Activated CD8-positive, alpha-beta memory T cell treated with anti-CD3 and anti-CD28 coated beads, Interleukin-2, amount 10 ng/mL, durations not matched to agents 7 days and 5 days (primary cell): ENCODE measurements at regions of chr17 and their contacts with region 1.

Region 1: GRCh38 chr17:45228763-45229539 is 7.3 kb downstream of the FMNL1 start:
- DNase-seq: peak; percentile 93
- ATAC-seq: peak; percentile 47
- H3K4me3 Mint-ChIP-seq: peak overlapping the region; percentile 93
- H3K27ac Mint-ChIP-seq: peak overlapping the region; percentile 100
- H3K4me1 Mint-ChIP-seq: peaks cover 74% of the 10 kb centered on the region
- H3K27me3 Mint-ChIP-seq: no peaks in the 10 kb centered on the region

Region 2: GRCh38 chr17:45087504-45087975 is 141.4 kb before region 1 on chr17:
- CTCF ChIA-PET with region 1: no interaction called
- DNase-seq: no peak
- ATAC-seq: no peak
- H3K4me3 Mint-ChIP-seq: no peak overlapping the region
- H3K27ac Mint-ChIP-seq: no peak overlapping the region
- H3K4me1 Mint-ChIP-seq: peaks cover 12% of the 10 kb centered on the region
- H3K27me3 Mint-ChIP-seq: no peaks in the 10 kb centered on the region

Region 3: GRCh38 chr17:45241328-45242011 is 12.5 kb after region 1 on chr17:
- CTCF ChIA-PET with region 1: interaction called, 386 read pairs
- DNase-seq: no peak
- ATAC-seq: no peak
- H3K4me3 Mint-ChIP-seq: no peak overlapping the region
- H3K27ac Mint-ChIP-seq: no peak overlapping the region
- H3K4me1 Mint-ChIP-seq: peaks cover 33% of the 10 kb centered on the region
- H3K27me3 Mint-ChIP-seq: no peaks in the 10 kb centered on the region

Region 4: GRCh38 chr17:45247429-45248131 is 18.6 kb after region 1 on chr17:
- CTCF ChIA-PET with region 1: interaction called, 386 read pairs
- DNase-seq: peak; percentile 100
- ATAC-seq: peak; percentile 91
- H3K4me3 Mint-ChIP-seq: peak overlapping the region; percentile 82
- H3K27ac Mint-ChIP-seq: peak overlapping the region; percentile 96
- H3K4me1 Mint-ChIP-seq: peaks cover 60% of the 10 kb centered on the region
- H3K27me3 Mint-ChIP-seq: no peaks in the 10 kb centered on the region

Region 5: DNA sequence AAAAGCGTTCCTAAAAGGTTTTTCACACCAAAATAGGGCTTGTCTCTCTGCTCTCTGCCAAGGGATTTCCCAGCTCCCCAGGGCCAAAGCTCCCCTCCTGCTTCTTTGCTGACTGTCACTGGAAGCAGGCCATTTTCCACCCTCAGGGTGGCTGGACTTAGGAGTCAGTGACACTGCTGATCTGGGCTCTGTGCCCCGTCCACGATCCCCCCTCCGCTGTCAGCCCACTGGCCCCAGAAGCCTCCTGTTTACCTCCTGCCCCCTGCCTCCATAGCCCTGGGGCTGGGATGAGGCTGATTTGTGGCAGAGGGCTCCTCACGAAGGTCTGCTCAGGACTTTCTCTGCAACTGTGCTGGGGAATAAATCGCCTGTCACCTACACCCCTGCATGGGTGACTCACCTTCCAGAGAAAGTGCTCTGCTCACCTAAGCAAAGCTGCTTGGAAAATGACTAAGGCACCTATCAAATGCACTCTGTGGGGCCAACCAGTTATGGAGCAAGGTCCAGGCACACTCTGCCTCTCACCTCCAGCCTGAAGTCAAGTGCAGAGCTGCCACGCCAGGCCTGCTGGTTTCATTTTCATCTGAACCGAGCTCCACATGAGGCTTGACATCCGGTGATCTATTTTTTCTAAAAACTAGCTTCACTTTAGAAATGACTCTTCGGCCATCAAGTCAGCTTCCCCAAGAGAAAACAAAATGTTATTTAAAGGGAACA is 83.0 kb after region 1 on chr17:
- CTCF ChIA-PET with region 1: interaction called, 16 read pairs
- DNase-seq: peak; percentile 94
- ATAC-seq: peak; percentile 57
- H3K4me3 Mint-ChIP-seq: peak overlapping the region; percentile 97
- H3K27ac Mint-ChIP-seq: peak overlapping the region; percentile 90
- H3K4me1 Mint-ChIP-seq: peaks cover 70% of the 10 kb centered on the region
- H3K27me3 Mint-ChIP-seq: no peaks in the 10 kb centered on the region

Region 6: GRCh38 chr17:45317112-45317928 is 88.4 kb after region 1 on chr17:
- CTCF ChIA-PET with region 1: interaction called, 16 read pairs
- DNase-seq: peak; percentile 100
- ATAC-seq: peak; percentile 84
- H3K4me3 Mint-ChIP-seq: peak overlapping the region; percentile 81
- H3K27ac Mint-ChIP-seq: peak overlapping the region; percentile 85
- H3K4me1 Mint-ChIP-seq: peaks cover 66% of the 10 kb centered on the region
- H3K27me3 Mint-ChIP-seq: no peaks in the 10 kb centered on the region

Region 7: GRCh38 chr17:45353043-45353442 is 124.1 kb after region 1 on chr17:
- CTCF ChIA-PET with region 1: no interaction called
- DNase-seq: no peak
- ATAC-seq: peak; percentile 65
- H3K4me3 Mint-ChIP-seq: no peak overlapping the region
- H3K27ac Mint-ChIP-seq: no peak overlapping the region
- H3K4me1 Mint-ChIP-seq: peaks cover 16% of the 10 kb centered on the region
- H3K27me3 Mint-ChIP-seq: peaks cover 29% of the 10 kb centered on the region